ENCODE measurements at regions of chr2 and their contacts with region 1.

Region 1: GRCh38 chr2:36792951-36793350 is 96.4 kb downstream of the VIT start:
- DNase-seq: no peak
- H3K4me3 Mint-ChIP-seq: no peak overlapping the region
- H3K27ac Mint-ChIP-seq: no peak overlapping the region
- H3K4me1 Mint-ChIP-seq: peaks cover 10% of the 10 kb centered on the region
- H3K27me3 Mint-ChIP-seq: peaks cover 60% of the 10 kb centered on the region
- CTCF ChIP-seq: no peak

Region 2: GRCh38 chr2:36695746-36696415 is 97.1 kb before region 1 on chr2:
- CTCF ChIA-PET with region 1: no interaction called
- POLR2A ChIA-PET with region 1: no interaction called
- intact Hi-C with region 1: no loop called
- DNase-seq: peak; percentile 38
- H3K4me3 Mint-ChIP-seq: no peak overlapping the region
- H3K27ac Mint-ChIP-seq: no peak overlapping the region
- H3K4me1 Mint-ChIP-seq: peaks cover 9% of the 10 kb centered on the region
- H3K27me3 Mint-ChIP-seq: no peaks in the 10 kb centered on the region
- CTCF ChIP-seq: no peak

Region 3: DNA sequence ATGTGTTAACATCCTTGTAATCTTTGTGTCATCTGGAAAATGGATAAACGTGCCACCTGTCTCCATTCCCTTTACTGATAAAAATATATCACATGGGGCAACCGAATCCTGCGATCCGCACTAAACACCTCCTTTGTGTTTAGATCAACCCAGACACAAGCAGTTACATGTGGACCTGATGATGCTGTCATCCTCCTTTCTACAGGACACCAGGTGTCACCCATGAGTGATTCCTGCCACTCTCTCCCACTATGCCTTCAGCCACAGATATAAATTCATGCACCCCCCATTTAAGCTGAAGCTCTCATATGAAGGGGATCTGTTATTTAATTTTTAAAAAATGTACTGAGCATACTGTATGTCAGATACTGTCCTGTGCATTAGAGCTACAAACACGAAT is 15.2 kb before region 1 on chr2:
- CTCF ChIA-PET with region 1: interaction called, 39 read pairs
- POLR2A ChIA-PET with region 1: interaction called, 4 read pairs
- intact Hi-C with region 1: no loop called
- DNase-seq: no peak
- H3K4me3 Mint-ChIP-seq: no peak overlapping the region
- H3K27ac Mint-ChIP-seq: no peak overlapping the region
- H3K4me1 Mint-ChIP-seq: no peaks in the 10 kb centered on the region
- H3K27me3 Mint-ChIP-seq: peaks cover 4% of the 10 kb centered on the region
- CTCF ChIP-seq: no peak

Region 4: DNA sequence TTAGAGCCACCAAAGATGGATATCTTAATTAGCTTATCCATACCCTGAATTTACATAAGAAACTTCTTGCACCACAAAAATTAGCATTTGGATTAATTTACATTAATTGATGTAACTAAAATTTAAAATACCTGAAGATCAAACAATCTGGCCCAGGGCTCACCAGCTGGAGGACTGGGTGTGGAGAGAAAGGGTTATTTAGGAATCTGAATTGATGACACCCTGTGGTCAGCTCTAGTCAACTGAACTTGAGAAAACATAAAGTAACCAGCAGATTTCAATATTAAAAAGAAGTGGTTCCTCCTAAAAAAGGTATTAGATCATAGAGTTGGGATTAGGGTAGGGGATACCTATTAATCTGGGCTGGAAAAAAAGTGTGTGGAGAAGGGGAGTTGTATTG is 50.9 kb after region 1 on chr2:
- CTCF ChIA-PET with region 1: no interaction called
- POLR2A ChIA-PET with region 1: no interaction called
- intact Hi-C with region 1: no loop called
- DNase-seq: no peak
- H3K4me3 Mint-ChIP-seq: no peak overlapping the region
- H3K27ac Mint-ChIP-seq: no peak overlapping the region
- H3K4me1 Mint-ChIP-seq: no peaks in the 10 kb centered on the region
- H3K27me3 Mint-ChIP-seq: no peaks in the 10 kb centered on the region
- CTCF ChIP-seq: no peak

Region 5: GRCh38 chr2:37365669-37366068 is 572.7 kb after region 1 on chr2:
- CTCF ChIA-PET with region 1: no interaction called
- POLR2A ChIA-PET with region 1: no interaction called
- intact Hi-C with region 1: no loop called
- DNase-seq: no peak
- H3K4me3 Mint-ChIP-seq: no peak overlapping the region
- H3K27ac Mint-ChIP-seq: no peak overlapping the region
- H3K4me1 Mint-ChIP-seq: peaks cover 6% of the 10 kb centered on the region
- H3K27me3 Mint-ChIP-seq: no peaks in the 10 kb centered on the region
- CTCF ChIP-seq: no peak